ENCODE measurements at regions of chr17 and their contacts with region 1.

Region 1: GRCh38 chr17:47315451-47316266 is 8.1 kb upstream of the EFCAB13 start:
- DNase-seq: peak; percentile 97
- ATAC-seq: peak; percentile 95
- H3K4me3 ChIP-seq: no peak overlapping the region
- H3K27ac ChIP-seq: no peak overlapping the region
- H3K4me1 ChIP-seq: peaks cover 18% of the 10 kb centered on the region
- H3K27me3 ChIP-seq: no peaks in the 10 kb centered on the region
- CTCF ChIP-seq: peak; percentile 99

Region 2: DNA sequence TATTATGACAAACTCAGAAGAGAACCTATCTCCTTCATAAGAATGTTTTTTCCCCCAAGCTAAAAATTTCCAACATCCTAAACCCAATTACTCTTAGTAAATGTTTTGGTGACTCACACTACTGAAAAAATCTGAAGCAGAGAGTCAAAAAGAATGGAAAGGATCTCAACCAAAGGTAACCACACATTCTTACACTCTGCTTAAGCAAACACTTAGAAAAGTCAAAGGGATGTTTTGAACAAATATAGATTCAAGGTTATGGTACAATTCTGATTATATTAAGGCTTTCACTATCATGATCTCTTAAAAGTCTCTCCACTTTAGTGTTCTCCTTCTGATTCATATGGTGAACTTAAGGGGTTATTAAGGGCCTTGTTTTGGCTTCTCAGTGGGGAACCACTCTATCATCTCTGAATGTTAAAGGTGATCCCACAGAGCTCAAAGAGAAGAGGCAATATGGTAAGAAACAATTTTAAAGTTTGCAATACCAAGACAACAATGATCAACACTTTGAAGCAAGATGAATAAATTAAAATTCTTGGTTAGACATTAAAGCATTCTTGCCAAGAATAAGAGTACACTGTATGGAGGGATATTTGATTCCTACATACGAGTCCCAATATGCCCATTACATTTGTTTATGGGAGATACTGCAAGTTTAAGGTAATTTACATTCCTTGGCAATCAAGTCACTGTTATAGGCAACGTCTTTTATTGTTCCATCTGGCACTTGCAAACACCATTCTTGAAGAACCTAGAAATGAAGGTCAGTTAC is 195.7 kb before region 1 on chr17:
- CTCF ChIA-PET with region 1: no interaction called
- POLR2A ChIA-PET with region 1: no interaction called
- intact Hi-C with region 1: loop called (anchors 5 kb)
- DNase-seq: peak; percentile 84
- ATAC-seq: peak; percentile 95
- H3K4me3 ChIP-seq: no peak overlapping the region
- H3K27ac ChIP-seq: 0 out of 2 replicates have a peak overlapping the region, but pooled peaks have one; percentile 2
- H3K4me1 ChIP-seq: peaks cover 20% of the 10 kb centered on the region
- H3K27me3 ChIP-seq: no peaks in the 10 kb centered on the region
- CTCF ChIP-seq: no peak

Region 3: DNA sequence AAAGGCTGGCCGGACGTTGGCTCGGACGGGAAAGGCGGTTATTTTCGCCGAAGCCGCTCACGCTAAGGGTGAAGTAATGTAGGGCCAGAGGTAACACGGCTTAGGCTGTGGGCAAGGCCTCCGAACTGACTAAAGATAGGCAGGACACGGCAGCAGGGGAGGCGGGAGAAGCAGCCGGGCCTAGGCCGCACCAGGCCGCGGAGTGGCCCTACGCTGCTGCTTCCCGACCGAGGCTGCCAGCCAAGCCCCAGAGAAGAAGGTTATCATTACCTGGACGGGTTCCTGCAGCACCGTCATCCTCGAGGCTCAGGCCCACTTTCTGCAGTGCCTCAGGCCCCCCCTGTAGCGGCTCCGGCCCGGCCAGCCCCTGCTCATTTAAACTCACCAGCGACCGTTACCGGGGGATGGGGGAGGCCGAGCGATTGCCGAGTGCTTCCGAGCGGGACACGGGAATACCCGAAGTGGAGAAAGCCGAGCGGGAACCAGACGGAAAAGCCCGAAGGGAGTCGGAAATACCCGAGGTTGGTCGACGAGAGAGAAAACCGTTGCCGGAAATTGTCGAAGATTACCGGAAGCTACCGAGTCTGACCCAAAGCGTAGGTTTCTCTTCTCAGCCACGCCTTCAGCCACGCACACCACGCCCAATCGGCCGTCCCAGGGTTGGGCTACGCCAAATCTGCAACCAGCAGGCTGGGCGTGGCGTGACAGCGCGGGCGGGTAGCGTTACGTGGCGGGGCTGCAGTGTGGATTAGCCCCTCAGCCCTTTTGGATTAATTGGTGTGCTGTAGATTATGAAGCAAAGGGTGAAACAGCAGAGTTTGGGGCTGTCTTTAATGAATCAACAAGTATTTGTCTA is 126.6 kb before region 1 on chr17 and contains the start of gene CDC27:
- CTCF ChIA-PET with region 1: interaction called, 6 read pairs
- POLR2A ChIA-PET with region 1: no interaction called
- intact Hi-C with region 1: loop called (anchors 1 kb)
- DNase-seq: peak; percentile 100
- ATAC-seq: peak; percentile 93
- H3K4me3 ChIP-seq: peak within 1 kb of the TSS; percentile 87
- H3K27ac ChIP-seq: peak within 1 kb of the TSS; percentile 78
- H3K4me1 ChIP-seq: peaks cover 20% of the 10 kb centered on the region
- H3K27me3 ChIP-seq: no peaks in the 10 kb centered on the region
- CTCF ChIP-seq: no peak
- total RNA-seq, gene CDC27: 149 and 167 TPM in 2 replicates

Region 4: DNA sequence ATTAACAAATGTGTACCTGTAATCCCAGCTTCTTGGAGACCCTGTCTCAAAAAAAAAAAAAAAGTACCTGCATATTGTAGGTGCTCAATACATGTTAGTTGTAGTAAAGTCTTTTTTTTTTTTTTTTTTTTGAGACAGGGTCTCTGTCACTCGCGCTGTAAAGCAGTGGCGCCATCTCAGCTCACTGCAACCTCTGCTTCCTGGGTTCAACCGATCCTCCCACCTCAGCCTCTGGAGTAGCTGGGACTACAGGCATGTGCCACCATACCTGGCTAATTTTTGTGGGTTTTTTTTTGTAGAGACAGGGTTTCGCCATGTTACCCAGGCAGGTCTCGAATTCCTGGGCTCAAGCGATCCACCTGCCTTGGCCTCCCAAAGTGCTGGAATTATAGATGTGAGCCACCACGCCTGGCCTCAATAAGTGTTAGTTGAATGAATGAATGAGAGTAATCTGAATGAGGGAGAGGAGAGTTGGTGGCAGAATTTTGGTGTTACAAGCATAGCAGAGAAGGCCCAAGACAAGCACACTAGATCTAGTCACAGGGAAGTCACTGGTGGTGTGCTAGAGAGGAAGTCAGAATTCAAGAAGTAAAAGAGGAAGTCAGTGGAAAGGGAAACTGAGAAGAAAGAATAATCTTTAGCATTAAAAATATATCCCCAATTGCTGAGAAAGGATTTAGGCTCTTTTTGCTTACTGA is 115.9 kb before region 1 on chr17:
- CTCF ChIA-PET with region 1: no interaction called
- POLR2A ChIA-PET with region 1: no interaction called
- intact Hi-C with region 1: no loop called
- DNase-seq: no peak
- ATAC-seq: no peak
- H3K4me3 ChIP-seq: no peak overlapping the region
- H3K27ac ChIP-seq: no peak overlapping the region
- H3K4me1 ChIP-seq: no peaks in the 10 kb centered on the region
- H3K27me3 ChIP-seq: no peaks in the 10 kb centered on the region
- CTCF ChIP-seq: no peak

Region 5: GRCh38 chr17:47229535-47230443 is 85.9 kb before region 1 on chr17:
- CTCF ChIA-PET with region 1: interaction called, 25 read pairs
- POLR2A ChIA-PET with region 1: no interaction called
- intact Hi-C with region 1: loop called (anchors 1 kb)
- DNase-seq: peak; percentile 99
- ATAC-seq: peak; percentile 84
- H3K4me3 ChIP-seq: peak overlapping the region; percentile 58
- H3K27ac ChIP-seq: no peak overlapping the region
- H3K4me1 ChIP-seq: peaks cover 28% of the 10 kb centered on the region
- H3K27me3 ChIP-seq: no peaks in the 10 kb centered on the region
- CTCF ChIP-seq: peak; percentile 100

Region 6: DNA sequence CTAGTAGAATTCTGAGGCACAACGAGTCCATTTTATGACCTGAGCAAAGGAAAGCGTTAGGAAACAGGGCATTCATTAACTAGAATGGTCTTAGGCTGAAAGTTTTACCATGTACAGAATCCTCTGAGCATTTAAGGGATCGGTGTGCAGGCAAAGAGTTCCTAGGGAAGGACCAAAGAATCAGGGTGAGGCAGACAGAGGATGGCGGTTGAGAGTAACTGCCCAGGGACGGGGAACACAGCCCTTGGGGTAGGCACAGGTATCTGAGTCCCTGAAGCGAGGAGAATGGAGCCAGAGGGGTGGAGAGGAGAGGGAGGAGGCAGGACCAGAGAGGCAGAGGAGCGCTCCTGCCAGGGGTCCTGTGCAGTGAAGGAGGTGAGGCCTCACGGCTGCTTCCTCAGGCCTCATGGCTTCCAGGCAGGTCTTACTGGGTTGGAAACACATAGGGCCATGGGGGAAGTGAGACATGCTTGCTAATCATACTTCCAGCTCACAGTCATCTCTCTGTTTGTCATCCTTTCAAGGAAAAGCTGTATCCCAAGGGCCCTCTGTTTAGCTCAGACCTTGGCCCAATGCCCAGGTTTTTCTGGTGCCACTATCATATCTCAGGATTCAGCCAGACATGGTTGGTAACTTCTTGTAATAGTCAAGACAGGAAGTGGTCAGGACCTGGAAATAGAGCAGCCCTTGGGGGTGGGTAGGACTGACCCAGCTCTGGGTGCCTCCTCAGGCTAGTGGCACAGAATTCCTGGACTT is 75.9 kb before region 1 on chr17:
- CTCF ChIA-PET with region 1: interaction called, 17 read pairs
- POLR2A ChIA-PET with region 1: no interaction called
- intact Hi-C with region 1: no loop called
- DNase-seq: peak; percentile 100
- ATAC-seq: peak; percentile 98
- H3K4me3 ChIP-seq: no peak overlapping the region
- H3K27ac ChIP-seq: peak overlapping the region; percentile 84
- H3K4me1 ChIP-seq: peaks cover 21% of the 10 kb centered on the region
- H3K27me3 ChIP-seq: no peaks in the 10 kb centered on the region
- CTCF ChIP-seq: no peak

Region 7: DNA sequence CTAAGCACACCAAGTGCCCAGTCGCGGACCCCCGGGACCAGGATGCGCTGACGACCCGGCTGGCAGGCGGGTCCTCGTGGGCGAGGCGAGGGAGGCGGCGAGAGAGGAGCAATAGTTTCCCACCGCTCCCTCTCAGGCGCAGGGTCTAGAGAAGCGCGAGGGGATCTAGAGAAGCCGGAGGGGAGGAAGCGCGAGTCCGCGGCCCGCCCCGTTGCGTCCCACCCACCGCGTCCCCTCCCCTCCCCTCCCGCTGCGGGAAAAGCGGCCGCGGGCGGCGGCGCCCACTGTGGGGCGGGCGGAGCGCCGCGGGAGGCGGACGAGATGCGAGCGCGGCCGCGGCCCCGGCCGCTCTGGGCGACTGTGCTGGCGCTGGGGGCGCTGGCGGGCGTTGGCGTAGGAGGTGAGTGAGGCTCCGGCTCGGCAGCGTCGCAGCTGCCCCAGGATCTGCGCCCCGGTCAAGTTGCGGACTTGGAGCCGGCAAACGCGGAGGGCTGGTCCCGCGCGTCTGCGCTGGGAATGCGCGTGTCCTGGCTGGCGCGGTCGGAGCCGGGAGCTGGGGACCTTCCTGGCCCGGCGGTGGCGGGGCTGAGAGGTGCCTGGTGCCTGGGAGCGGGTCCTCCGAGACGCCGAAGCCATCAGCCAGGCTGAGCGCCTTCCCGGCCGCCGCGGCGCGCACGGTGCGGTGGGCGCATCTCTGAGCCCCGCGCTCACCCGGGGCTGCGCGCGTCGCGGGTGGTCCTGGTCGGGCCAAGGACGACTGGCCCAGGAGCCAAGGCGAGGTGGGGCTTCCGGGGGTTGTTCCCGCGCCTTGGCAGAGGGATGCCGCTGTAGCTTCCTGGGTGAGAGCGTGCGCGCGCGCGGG is 61.9 kb before region 1 on chr17 and contains the start of gene ITGB3:
- CTCF ChIA-PET with region 1: no interaction called
- POLR2A ChIA-PET with region 1: no interaction called
- intact Hi-C with region 1: loop called (anchors 1 kb)
- DNase-seq: peak; percentile 84
- ATAC-seq: peak; percentile 96
- H3K4me3 ChIP-seq: peak within 1 kb of the TSS; percentile 77
- H3K27ac ChIP-seq: no peak within 1 kb of the TSS
- H3K4me1 ChIP-seq: peaks cover 21% of the 10 kb centered on the region
- H3K27me3 ChIP-seq: peaks cover 4% of the 10 kb centered on the region
- CTCF ChIP-seq: peak; percentile 57
- total RNA-seq, gene ITGB3: 0.36 and 0.69 TPM in 2 replicates

Region 8: DNA sequence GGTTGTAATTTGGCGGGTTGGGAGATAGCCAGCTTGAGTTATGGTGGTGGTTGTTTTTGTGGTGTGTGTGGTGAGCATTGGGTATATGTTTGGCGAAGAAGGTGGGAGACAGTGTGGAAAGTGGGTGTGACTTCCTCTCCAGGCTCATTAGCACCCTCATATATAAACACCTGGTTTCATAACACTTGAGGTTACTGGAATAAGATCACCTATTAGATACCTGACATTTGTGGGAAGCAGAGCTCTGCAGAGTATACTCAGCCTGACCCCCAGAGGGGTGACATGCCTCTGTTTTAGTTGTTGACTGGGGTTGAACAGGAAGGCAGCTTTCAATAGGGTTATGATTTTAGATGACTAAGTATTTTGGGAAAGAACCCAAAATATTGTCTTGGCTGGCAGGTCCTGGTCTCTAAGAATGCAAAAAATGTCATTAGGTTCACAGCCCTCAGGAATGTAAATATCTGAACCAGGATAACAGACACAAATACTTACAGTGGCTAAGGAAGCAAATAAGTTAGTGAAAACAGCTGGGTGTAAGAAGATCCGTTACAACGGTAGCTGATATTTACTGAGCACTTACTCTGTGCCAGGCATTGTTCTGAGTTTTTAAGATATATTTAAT is 10.2 kb before region 1 on chr17:
- CTCF ChIA-PET with region 1: interaction called, 16 read pairs
- POLR2A ChIA-PET with region 1: no interaction called
- intact Hi-C with region 1: no loop called
- DNase-seq: peak; percentile 100
- ATAC-seq: peak; percentile 92
- H3K4me3 ChIP-seq: no peak overlapping the region
- H3K27ac ChIP-seq: peak overlapping the region; percentile 56
- H3K4me1 ChIP-seq: peaks cover 24% of the 10 kb centered on the region
- H3K27me3 ChIP-seq: no peaks in the 10 kb centered on the region
- CTCF ChIP-seq: peak; percentile 33; the same call in 1 of the 2 replicates

Region 9: GRCh38 chr17:47404006-47404405 is 88.3 kb after region 1 on chr17:
- CTCF ChIA-PET with region 1: no interaction called
- POLR2A ChIA-PET with region 1: no interaction called
- intact Hi-C with region 1: no loop called
- DNase-seq: no peak
- ATAC-seq: no peak
- H3K4me3 ChIP-seq: no peak overlapping the region
- H3K27ac ChIP-seq: no peak overlapping the region
- H3K4me1 ChIP-seq: no peaks in the 10 kb centered on the region
- H3K27me3 ChIP-seq: no peaks in the 10 kb centered on the region
- CTCF ChIP-seq: no peak

Measured in PC-3 (cell line).